ENCODE measurements at regions of chr1 and their contacts with region 1.

Region 1: GRCh38 chr1:67748630-67749029 is 63.6 kb downstream of the GADD45A start:
- DNase-seq: no peak

Region 2: DNA sequence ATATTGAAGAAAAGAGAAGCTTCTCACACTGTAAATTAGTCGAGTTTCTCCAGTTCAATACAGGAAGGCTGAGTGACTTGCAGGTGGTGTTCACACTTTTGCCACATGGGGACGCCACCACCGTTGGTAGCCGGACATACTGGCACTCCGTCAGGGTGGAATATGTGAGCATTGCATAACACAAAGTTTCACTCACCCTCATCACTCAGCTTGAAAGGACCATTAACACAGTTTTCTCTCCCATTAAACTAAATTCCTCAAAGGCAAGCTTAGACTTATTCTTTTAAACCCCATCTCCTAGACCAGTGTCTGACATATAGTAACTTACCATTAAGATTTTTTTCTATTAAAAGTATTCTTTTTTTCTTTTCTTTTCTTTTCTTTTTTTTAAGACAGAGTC is 213.2 kb before region 1 on chr1:
- in situ Hi-C with region 1: loop called (anchors 10 kb)
- DNase-seq: peak; percentile 67

Region 3: DNA sequence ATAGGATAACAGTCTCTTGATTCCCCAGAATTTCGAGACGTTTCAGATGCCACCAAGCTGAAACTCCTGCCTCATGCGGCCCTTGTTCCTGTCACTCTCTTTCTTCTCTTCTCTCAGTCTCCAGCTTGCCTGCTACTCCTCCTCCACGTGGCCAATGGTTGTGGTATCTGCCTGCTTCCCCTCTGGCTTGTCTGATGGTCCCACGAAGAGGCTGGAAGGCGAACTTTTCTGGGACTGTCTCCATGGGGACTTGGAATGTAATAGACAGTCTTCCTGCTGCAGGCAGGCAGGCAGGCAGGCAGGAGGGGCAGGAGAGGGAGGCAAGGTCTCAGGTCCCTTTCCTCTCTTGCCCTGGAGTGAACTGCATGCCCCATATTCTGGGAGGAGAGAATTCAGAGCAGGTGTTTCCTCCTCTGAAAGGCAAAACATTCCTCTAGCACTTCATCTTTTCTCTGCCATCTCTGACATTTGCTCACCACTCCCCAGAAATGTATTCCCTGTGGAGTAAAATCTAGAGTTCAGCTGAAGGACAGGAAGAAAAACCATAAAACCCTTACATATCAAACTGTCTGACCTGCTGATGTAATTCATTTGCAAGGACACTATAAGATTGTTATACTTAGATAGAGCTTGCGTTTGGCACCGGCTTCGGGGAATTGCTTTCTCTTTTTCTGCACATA is 148.8 kb after region 1 on chr1:
- in situ Hi-C with region 1: no loop called
- DNase-seq: no peak

Measured in KBM-7 (cell line).